ENCODE measurements at regions of chrX and their contacts with region 1.

Region 1: DNA sequence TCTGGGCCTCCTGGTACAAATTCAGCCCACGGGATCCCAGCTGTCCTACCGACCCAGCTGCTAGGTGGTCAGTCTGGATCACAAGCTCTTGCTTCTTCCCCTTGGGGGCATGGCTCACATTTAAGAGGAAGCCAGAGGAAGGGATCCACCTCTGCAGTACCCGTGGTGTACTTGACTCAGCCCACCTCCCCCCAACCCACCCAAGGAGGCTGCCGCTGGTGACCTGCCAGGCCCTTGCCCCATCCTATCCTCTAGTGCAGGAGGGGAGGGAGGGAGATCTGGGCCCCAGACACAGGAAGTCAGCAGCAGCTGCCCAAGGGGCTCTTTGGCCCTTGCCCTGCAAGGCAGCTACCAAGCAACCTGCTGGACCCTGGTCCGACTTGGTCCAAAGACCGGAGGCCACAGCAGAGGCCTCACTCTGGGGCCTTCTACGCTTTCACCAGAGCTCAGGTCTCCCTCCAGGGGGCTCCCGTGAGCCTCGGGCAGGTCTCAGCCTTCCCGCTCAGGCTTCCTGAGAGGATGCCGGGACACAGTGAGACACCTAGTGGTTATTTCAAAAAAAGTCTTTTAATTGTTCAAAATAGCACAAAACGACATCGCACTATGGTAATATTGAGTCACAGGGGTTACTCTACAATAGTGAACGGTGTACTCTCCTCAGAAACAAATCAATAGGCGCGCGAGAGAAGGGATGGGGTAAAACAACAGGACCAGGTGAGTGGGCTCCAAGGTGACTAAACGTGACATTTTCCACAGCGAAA is 2.7 kb upstream of the RENBP start:
- DNase-seq: peak; percentile 64 to 85 (median 75)
- H3K4me3 ChIP-seq: no peak overlapping the region
- H3K4me3 Mint-ChIP-seq: peak overlapping the region in 4 of 7 donors; percentile 0 to 17 (median 10)
- H3K27ac ChIP-seq: no peak overlapping the region
- H3K27ac Mint-ChIP-seq: peak overlapping the region in 7 of 8 donors; percentile 59 to 93 (median 78)
- H3K4me1 ChIP-seq: peaks cover 13% of the 10 kb centered on the region
- H3K4me1 Mint-ChIP-seq: peaks cover 9 to 15% (median 13%) of the 10 kb centered on the region in 3 donors
- H3K27me3 ChIP-seq: no peaks in the 10 kb centered on the region
- H3K27me3 Mint-ChIP-seq: peaks cover 0 to 2% of the 10 kb centered on the region in 2 donors

Region 2: GRCh38 chrX:153927922-153928760 is 19.0 kb before region 1 on chrX:
- CTCF ChIA-PET with region 1: interaction called, 230 read pairs
- POLR2A ChIA-PET with region 1: interaction called, 17 read pairs
- DNase-seq: peak; percentile 86 to 98 (median 96)
- H3K4me3 ChIP-seq: peak overlapping the region; percentile 86
- H3K4me3 Mint-ChIP-seq: peak overlapping the region; percentile 89 to 95 (median 91)
- H3K27ac ChIP-seq: peak overlapping the region; percentile 91
- H3K27ac Mint-ChIP-seq: peak overlapping the region; percentile 91 to 100 (median 99)
- H3K4me1 ChIP-seq: peaks cover 11% of the 10 kb centered on the region
- H3K4me1 Mint-ChIP-seq: peaks cover 43 to 61% (median 46%) of the 10 kb centered on the region in 3 donors
- H3K27me3 ChIP-seq: no peaks in the 10 kb centered on the region
- H3K27me3 Mint-ChIP-seq: no peaks in the 10 kb centered on the region

Region 3: GRCh38 chrX:153934473-153935325 is 12.5 kb before region 1 on chrX and contains the start of gene NAA10:
- CTCF ChIA-PET with region 1: interaction called, 230 read pairs
- POLR2A ChIA-PET with region 1: interaction called, 3 read pairs
- DNase-seq: peak; percentile 34 to 67 (median 53)
- H3K4me3 ChIP-seq: peak within 1 kb of the TSS; percentile 43
- H3K4me3 Mint-ChIP-seq: peak within 1 kb of the TSS; percentile 86 to 93 (median 88)
- H3K27ac ChIP-seq: peak within 1 kb of the TSS; percentile 38
- H3K27ac Mint-ChIP-seq: peak within 1 kb of the TSS; percentile 75 to 98 (median 86)
- H3K4me1 ChIP-seq: peaks cover 4% of the 10 kb centered on the region
- H3K4me1 Mint-ChIP-seq: peaks cover 18 to 27% (median 24%) of the 10 kb centered on the region in 3 donors
- H3K27me3 ChIP-seq: no peaks in the 10 kb centered on the region
- H3K27me3 Mint-ChIP-seq: peaks cover 0 to 6% of the 10 kb centered on the region in 2 donors
- total RNA-seq, gene NAA10: 160 to 162 TPM

Region 4: DNA sequence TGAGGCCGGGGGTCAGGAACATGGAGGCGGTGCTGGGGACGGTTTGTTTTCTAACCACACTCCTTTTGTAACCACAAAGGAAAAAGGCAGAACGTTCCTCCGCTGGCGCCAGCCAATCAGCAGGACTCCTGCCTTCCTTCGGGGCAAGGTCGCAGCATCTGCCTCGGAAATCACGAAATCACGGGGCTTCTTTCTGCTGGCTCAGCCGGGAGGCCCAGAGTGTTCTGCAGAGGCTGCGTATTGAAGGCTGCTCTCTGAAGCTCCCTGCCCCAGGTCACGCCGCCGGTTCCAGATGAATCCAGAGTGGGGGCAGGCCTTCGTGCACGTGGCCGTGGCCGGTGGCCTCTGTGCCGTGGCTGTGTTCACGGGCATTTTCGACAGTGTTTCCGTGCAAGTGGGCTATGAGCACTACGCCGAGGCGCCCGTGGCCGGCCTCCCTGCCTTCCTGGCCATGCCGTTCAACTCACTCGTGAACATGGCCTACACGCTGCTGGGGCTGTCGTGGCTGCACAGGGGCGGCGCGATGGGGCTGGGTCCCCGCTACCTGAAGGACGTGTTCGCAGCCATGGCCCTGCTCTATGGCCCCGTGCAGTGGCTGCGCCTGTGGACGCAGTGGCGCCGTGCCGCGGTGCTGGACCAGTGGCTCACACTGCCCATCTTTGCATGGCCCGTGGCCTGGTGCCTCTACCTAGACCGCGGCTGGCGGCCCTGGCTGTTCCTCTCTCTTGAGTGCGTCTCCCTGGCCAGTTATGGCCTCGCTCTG is 34.8 kb after region 1 on chrX:
- CTCF ChIA-PET with region 1: no interaction called
- POLR2A ChIA-PET with region 1: no interaction called
- DNase-seq: peak; percentile 29 to 64 (median 51)
- H3K4me3 ChIP-seq: peak overlapping the region; percentile 23
- H3K4me3 Mint-ChIP-seq: peak overlapping the region; percentile 71 to 89 (median 76)
- H3K27ac ChIP-seq: no peak overlapping the region
- H3K27ac Mint-ChIP-seq: peak overlapping the region; percentile 91 to 99 (median 95)
- H3K4me1 ChIP-seq: peaks cover 55% of the 10 kb centered on the region
- H3K4me1 Mint-ChIP-seq: peaks cover 37 to 53% (median 43%) of the 10 kb centered on the region in 3 donors
- H3K27me3 ChIP-seq: no peaks in the 10 kb centered on the region
- H3K27me3 Mint-ChIP-seq: peaks cover 0 to 6% of the 10 kb centered on the region in 2 donors